Activated T-helper 2 cell treated with anti-CD3 and anti-CD28 coated beads, Interferon-gamma antibody, Interleukin-2, Interleukin-4, amounts not matched to agents 10 μg/mL and 5 μg/mL and 100 μg/mL, durations not matched to agents 14 hours and 24 hours and 36 hours (primary cell): ENCODE measurements at regions of chr4 and their contacts with region 1.

Region 1: DNA sequence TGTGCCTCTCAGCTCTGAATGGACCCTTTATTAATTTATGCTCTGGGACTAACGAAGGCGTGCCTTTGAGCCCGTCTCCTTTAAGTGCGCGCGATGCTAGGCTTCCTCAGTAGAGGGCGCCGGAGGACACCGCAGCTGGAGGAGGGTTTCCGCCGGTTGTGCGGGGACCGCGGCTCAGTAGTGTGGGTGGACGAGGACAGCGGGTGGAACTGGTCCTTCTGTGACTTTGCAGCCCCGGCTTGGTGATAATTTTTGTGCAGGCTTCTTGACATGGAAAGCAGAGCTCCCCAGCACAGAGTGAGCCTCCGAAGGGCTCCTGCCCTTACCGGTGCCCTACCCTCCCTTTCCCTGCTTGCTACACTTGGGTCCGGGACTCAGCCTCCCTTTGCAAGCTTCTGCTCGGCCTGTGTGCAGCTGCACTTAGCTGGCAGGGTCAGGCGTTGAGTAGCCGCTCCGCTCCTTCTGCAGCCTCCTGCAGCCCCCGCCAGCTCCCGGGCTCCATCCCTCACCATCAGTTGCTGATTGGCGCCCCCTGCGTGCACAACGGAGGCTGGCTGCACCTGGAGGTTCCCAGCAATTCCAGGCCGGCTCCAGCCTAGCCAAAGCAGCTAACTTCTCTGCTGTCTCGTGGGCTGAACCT is 26.8 kb upstream of the BOD1L1 start:
- DNase-seq: peak; percentile 70
- H3K4me3 Mint-ChIP-seq: peak overlapping the region; percentile 74
- H3K27ac Mint-ChIP-seq: no peak overlapping the region
- H3K4me1 Mint-ChIP-seq: peaks cover 13% of the 10 kb centered on the region
- H3K27me3 Mint-ChIP-seq: peaks cover 7% of the 10 kb centered on the region

Region 2: DNA sequence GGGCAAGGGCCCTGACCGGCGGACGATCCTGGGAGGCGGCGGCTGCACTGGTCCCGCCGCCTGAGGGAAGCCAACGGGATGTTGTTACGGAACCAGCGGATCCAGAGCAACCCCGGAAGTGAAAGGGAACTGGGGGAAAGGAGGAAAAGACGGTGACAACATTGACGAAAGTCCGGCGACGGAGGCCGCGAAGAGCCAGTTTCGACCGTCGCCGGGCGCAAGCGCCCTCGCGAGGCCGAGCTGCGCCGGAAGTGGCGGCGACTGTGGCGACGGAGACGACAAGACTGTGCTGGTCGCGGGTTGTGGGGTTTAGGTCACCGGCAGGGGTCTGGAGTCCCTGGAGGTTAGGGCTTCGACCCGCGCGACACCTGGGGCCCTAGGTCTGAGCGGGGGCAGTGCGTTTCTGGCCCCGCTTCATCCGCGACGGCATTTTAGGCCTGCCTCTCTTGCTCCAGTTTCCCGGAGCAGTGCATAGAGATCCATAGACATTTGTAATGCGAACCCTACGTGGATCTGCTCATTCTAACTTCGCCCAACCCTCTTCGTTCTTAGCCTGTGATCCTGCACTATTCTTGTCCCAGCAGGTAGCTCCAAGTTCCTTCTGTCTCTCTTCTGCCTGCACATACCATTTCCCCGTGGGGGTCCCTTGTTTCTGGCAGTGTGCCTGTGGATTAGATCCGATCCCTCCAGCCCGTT is 26.5 kb before region 1 on chr4 and contains the start of gene BOD1L1:
- intact Hi-C with region 1: loop called (anchors 1 kb)
- DNase-seq: peak; percentile 78
- H3K4me3 Mint-ChIP-seq: peak within 1 kb of the TSS; percentile 98
- H3K27ac Mint-ChIP-seq: peak within 1 kb of the TSS; percentile 96
- H3K4me1 Mint-ChIP-seq: peaks cover 21% of the 10 kb centered on the region
- H3K27me3 Mint-ChIP-seq: no peaks in the 10 kb centered on the region
- total RNA-seq, gene BOD1L1: 41.5 and 42.2 TPM in 2 replicates

Region 3: DNA sequence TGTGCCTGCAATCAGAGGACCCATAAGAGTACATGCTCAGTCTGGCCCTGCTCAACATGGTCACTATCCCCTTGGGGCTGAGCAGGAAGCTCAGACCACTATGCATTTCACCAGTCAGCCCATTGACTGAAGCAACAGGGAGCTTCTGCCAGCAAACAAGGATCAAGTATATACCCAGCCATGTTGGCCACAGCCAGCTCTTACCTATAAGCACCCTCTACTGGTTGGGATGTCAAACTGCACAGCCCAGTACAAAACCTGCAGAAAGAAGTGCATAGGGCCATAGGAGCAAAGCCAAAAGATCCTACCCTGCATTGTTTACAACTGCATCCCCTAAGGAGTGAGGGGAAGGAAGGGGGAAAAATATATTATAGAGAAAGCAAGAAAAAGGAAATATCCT is 1133.6 kb after region 1 on chr4:
- intact Hi-C with region 1: loop called (anchors 5 kb)
- DNase-seq: no peak
- H3K4me3 Mint-ChIP-seq: no peak overlapping the region
- H3K27ac Mint-ChIP-seq: no peak overlapping the region
- H3K4me1 Mint-ChIP-seq: peaks cover 14% of the 10 kb centered on the region
- H3K27me3 Mint-ChIP-seq: no peaks in the 10 kb centered on the region

Region 4: DNA sequence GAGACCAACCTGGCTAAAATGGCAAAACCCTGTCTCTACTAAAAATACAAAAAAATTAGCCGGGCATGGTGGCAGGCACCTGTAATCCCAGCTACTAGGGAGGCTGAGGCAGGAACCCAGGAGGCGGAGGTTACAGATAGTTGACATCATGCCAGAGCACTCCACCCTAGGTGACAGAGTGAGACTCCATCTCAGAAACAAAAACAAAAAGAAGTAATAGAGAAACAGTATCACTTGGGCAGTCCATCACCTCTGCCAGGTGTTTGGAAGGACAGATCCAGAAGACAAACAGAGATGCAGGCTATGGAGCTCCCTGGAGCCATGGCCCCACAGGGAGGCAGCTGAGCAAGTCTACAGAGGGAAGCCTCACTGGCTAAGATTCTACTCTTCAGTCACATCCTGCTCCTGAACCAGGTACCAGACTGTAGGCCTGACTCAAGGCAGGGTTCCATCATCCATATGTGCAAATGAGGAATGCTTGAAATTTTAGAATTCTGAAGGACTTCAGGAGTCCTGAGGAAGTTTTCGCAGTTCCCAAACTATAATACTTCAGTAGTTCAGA is 1266.6 kb after region 1 on chr4:
- intact Hi-C with region 1: loop called (anchors 2 kb)
- DNase-seq: no peak
- H3K4me3 Mint-ChIP-seq: no peak overlapping the region
- H3K27ac Mint-ChIP-seq: no peak overlapping the region
- H3K4me1 Mint-ChIP-seq: no peaks in the 10 kb centered on the region
- H3K27me3 Mint-ChIP-seq: peaks cover 2% of the 10 kb centered on the region

Region 5: GRCh38 chr4:15231265-15232091 is 1577.2 kb after region 1 on chr4:
- intact Hi-C with region 1: loop called (anchors 10 kb)
- DNase-seq: peak; percentile 61
- H3K4me3 Mint-ChIP-seq: no peak overlapping the region
- H3K27ac Mint-ChIP-seq: no peak overlapping the region
- H3K4me1 Mint-ChIP-seq: peaks cover 30% of the 10 kb centered on the region
- H3K27me3 Mint-ChIP-seq: peaks cover 2% of the 10 kb centered on the region